ENCODE measurements at regions of chr10 and their contacts with region 1.

Region 1: GRCh38 chr10:79374312-79375191 is 27.3 kb downstream of the PPIF start:
- DNase-seq: peak; percentile 94

Region 2: DNA sequence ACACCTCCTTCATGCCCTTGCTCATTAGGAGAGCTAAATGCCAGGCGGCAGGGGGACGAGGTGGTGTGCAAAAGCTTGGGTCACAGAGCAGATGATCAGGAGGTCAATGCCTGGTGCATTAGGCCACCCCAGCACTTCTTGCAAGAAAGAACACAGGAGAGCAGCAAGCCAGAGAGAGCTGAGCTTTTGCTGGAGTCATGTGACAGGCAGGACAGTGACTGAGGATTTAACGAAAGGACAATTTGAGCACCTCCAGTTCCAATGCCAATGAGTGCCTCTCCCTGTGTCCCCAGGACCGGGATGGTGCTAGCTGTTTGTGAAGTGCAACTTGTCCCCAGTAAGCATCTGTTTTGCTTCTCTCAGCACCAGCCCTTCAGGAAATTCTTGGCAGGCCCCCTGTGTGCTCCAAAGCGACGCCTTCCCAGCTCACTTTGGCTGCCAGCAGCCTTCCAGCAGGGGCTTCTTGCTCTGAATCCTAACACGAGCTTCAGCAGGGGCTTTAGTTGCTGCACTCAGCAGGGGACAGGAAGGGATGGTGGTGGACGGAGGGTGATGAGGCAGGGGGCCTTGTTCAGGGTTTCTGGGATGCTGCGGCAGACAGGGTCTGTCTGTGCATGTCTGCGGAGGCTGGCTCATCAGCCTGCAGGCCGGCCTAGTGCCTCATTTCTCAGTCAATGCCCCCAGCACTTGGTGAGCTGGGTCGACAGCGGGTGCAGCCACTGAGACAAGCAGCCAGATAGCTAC is 972.8 kb before region 1 on chr10:
- intact Hi-C with region 1: no loop called
- DNase-seq: no peak

Region 3: GRCh38 chr10:79463578-79464496 is 89.3 kb after region 1 on chr10:
- intact Hi-C with region 1: loop called in 1 of 2 experiments (anchors 2 kb)
- DNase-seq: peak; percentile 82

Measured in posterior vena cava (tissue), 2 donors.